Left colon (tissue), 2 donors: ENCODE measurements at regions of chr1 and their contacts with region 1.

Region 1: GRCh38 chr1:232793944-232794343 is 11.3 kb upstream of the MAP10 start:
- DNase-seq: peak in 1 of 2 donors; percentile 34
- ATAC-seq: peak; percentile 98

Region 2: GRCh38 chr1:232635778-232636356 is 158.1 kb before region 1 on chr1:
- intact Hi-C with region 1: loop called in 1 of 2 experiments (anchors 5 kb)
- DNase-seq: no peak
- ATAC-seq: peak; percentile 40